ENCODE measurements at regions of chr1 and their contacts with region 1.

Region 1: GRCh38 chr1:209601809-209602657 is 18.5 kb downstream of the CAMK1G start:
- DNase-seq: peak; percentile 55 to 60
- ATAC-seq: peak; percentile 96 to 98
- H3K4me3 ChIP-seq: no peak overlapping the region
- H3K27ac ChIP-seq: no peak overlapping the region
- H3K4me1 ChIP-seq: peaks cover 12% of the 10 kb centered on the region
- CTCF ChIP-seq: peak; percentile 74
- EP300 ChIP-seq: no peak
- POLR2A ChIP-seq: no peak
- RAD21 ChIP-seq: peak; percentile 80 to 81

Region 2: DNA sequence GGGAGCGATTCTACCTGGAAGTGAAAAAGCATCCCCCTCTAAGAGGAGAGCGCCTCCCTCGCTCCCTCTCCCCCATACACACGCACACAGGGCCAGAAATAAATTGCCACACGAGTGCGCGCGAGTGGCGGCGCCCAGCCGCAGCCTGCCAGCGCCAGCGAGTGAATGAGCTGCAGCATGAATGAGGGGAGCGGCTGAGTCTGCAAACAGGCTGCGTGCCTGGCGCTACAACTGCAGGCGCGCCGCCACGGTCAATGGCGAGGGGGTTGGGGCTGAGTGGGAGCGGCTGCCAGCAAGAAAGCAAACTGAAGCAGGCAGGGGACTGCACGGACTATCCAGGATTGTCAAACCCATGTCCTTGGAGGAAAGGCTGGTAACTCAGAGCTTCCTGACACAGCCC is 16.4 kb before region 1 on chr1:
- CTCF ChIA-PET with region 1: interaction called, 27 read pairs
- POLR2A ChIA-PET with region 1: no interaction called
- DNase-seq: no peak
- ATAC-seq: peak; percentile 52 to 67; a peak in 5 of 6 replicates
- H3K4me3 ChIP-seq: 0 out of 3 replicates have a peak overlapping the region, but pooled peaks have one; percentile 24
- H3K27ac ChIP-seq: no peak overlapping the region
- H3K4me1 ChIP-seq: peaks cover 10% of the 10 kb centered on the region
- CTCF ChIP-seq: no peak
- EP300 ChIP-seq: no peak
- POLR2A ChIP-seq: no peak
- RAD21 ChIP-seq: no peak

Region 3: DNA sequence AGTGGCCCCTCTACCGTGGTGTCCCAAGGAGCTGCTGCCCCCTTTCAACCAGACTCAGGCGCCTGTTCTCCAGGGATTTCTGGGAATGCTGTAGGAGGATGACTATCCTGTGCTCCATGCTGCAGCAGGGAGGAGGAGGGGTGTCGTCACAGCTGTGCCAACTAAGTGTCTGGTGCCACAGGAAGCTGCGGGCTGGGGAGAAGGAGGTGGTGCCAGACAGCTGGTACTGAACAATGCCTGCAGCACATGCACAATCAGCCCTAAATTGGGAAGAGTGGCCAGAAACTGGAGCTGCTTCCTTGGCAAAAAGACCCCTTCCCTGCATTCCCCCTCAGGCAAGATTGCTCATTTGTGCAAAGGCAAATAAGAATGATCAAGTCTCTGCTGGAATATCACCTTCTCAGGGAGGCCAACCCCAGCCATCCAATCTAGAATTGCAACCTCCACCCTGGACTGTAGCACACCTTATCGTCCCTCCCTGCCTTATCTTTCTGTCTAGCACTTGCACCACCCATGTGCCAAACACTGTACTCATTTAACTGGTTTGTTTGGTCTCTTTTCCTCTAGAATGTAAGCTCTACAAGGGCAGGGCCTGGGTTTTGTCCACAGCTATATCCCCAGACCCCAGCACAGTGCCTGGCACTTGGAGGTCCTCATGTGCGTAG is 16.9 kb after region 1 on chr1:
- CTCF ChIA-PET with region 1: interaction called, 16 read pairs
- POLR2A ChIA-PET with region 1: no interaction called
- DNase-seq: no peak
- ATAC-seq: no peak
- H3K4me3 ChIP-seq: no peak overlapping the region
- H3K27ac ChIP-seq: no peak overlapping the region
- H3K4me1 ChIP-seq: no peaks in the 10 kb centered on the region
- CTCF ChIP-seq: no peak
- EP300 ChIP-seq: no peak
- POLR2A ChIP-seq: no peak
- RAD21 ChIP-seq: no peak